OCI-LY7 (cell line): ENCODE measurements at regions of chr6 and their contacts with region 1.

Region 1: GRCh38 chr6:107318100-107318736 is 141.1 kb downstream of the PDSS2 start:
- DNase-seq: peak; percentile 80
- H3K4me3 ChIP-seq: no peak overlapping the region
- H3K27ac ChIP-seq: no peak overlapping the region
- H3K4me1 ChIP-seq: peaks cover 33% of the 10 kb centered on the region
- CTCF ChIP-seq: peak; percentile 98

Region 2: GRCh38 chr6:107132330-107132954 is 185.8 kb before region 1 on chr6:
- CTCF ChIA-PET with region 1: no interaction called
- POLR2A ChIA-PET with region 1: interaction called, 5 read pairs
- intact Hi-C with region 1: loop called (anchors 2 kb)
- DNase-seq: peak; percentile 71
- H3K4me3 ChIP-seq: no peak overlapping the region
- H3K27ac ChIP-seq: no peak overlapping the region
- H3K4me1 ChIP-seq: peaks cover 13% of the 10 kb centered on the region
- CTCF ChIP-seq: peak; percentile 86

Region 3: GRCh38 chr6:107218142-107218541 is 100.1 kb before region 1 on chr6:
- CTCF ChIA-PET with region 1: no interaction called
- POLR2A ChIA-PET with region 1: no interaction called
- intact Hi-C with region 1: no loop called
- DNase-seq: peak; percentile 5
- H3K4me3 ChIP-seq: no peak overlapping the region
- H3K27ac ChIP-seq: no peak overlapping the region
- H3K4me1 ChIP-seq: no peaks in the 10 kb centered on the region
- CTCF ChIP-seq: no peak

Region 4: GRCh38 chr6:107264357-107264840 is 53.8 kb before region 1 on chr6:
- CTCF ChIA-PET with region 1: no interaction called
- POLR2A ChIA-PET with region 1: no interaction called
- intact Hi-C with region 1: no loop called
- DNase-seq: no peak
- H3K4me3 ChIP-seq: no peak overlapping the region
- H3K27ac ChIP-seq: no peak overlapping the region
- H3K4me1 ChIP-seq: peaks cover 6% of the 10 kb centered on the region
- CTCF ChIP-seq: no peak